ENCODE measurements at regions of chr16 and their contacts with region 1.

Region 1: DNA sequence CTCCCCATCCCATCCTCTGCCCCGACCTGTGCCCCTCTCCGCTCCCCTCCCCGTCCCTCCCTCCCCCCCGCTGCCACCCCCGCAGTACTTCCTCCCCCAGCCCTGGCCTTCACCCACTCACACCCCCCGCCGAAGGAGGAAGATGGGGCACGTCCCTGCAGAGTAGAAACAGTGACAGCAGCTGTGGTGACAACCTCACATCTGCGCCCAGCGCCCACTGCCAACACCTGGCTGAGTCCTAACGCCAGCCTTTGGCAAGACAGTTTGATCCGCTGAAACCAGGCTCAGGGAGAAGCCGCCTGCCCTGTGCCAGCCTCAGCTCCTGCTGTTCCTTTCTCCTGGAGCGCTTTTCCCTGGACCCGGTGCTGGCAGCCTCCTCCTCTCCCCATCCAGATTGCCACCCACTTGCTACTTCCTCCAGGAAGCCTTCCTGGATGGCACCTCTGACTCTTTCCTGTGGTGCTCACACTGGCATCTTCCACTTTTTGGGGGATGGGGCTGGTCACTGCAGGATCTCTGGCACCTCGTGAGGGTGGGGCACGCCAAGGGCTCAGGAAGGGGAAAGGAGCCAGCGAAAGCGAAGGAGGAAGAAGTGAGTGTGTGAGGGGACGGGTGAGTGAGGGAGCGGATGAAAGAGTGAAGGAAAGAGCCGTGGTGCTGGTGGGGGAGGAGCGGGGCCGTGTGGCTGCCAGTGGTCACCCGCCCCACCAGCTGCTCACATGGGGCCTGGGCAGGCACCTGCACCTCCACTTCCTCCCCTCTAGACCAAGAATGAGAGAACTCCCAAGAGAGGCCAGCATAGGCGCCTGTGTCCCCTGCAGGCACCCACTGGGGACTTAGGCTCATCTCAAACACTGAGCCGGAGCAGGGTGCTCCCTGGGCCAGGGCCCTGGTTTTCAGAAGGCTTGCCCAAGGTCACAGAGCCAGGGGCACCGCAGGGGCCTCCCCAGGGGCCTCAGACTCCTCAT is 27.0 kb downstream of the ZFPM1 start:
- DNase-seq: peak; percentile 58
- ATAC-seq: peak; percentile 75
- H3K4me3 Mint-ChIP-seq: peak overlapping the region; percentile 68
- H3K27ac Mint-ChIP-seq: peak overlapping the region; percentile 80
- H3K4me1 Mint-ChIP-seq: peaks cover 61% of the 10 kb centered on the region
- H3K27me3 Mint-ChIP-seq: no peaks in the 10 kb centered on the region
- CTCF ChIP-seq: no peak

Region 2: GRCh38 chr16:88102597-88102996 is 377.5 kb before region 1 on chr16:
- CTCF ChIA-PET with region 1: no interaction called
- POLR2A ChIA-PET with region 1: no interaction called
- intact Hi-C with region 1: no loop called
- DNase-seq: no peak
- ATAC-seq: no peak
- H3K4me3 Mint-ChIP-seq: no peak overlapping the region
- H3K27ac Mint-ChIP-seq: no peak overlapping the region
- H3K4me1 Mint-ChIP-seq: peaks cover 8% of the 10 kb centered on the region
- H3K27me3 Mint-ChIP-seq: peaks cover 20% of the 10 kb centered on the region
- CTCF ChIP-seq: no peak

Region 3: GRCh38 chr16:88430524-88431446 is 49.3 kb before region 1 on chr16:
- CTCF ChIA-PET with region 1: no interaction called
- POLR2A ChIA-PET with region 1: no interaction called
- intact Hi-C with region 1: no loop called
- DNase-seq: peak; percentile 62
- ATAC-seq: peak; percentile 70
- H3K4me3 Mint-ChIP-seq: peak overlapping the region; percentile 76
- H3K27ac Mint-ChIP-seq: no peak overlapping the region
- H3K4me1 Mint-ChIP-seq: peaks cover 11% of the 10 kb centered on the region
- H3K27me3 Mint-ChIP-seq: no peaks in the 10 kb centered on the region
- CTCF ChIP-seq: no peak

Region 4: GRCh38 chr16:88442727-88443576 is 37.1 kb before region 1 on chr16:
- CTCF ChIA-PET with region 1: no interaction called
- POLR2A ChIA-PET with region 1: no interaction called
- intact Hi-C with region 1: loop called (anchors 1 kb)
- DNase-seq: peak; percentile 83
- ATAC-seq: peak; percentile 89
- H3K4me3 Mint-ChIP-seq: no peak overlapping the region
- H3K27ac Mint-ChIP-seq: peak overlapping the region; percentile 12
- H3K4me1 Mint-ChIP-seq: peaks cover 5% of the 10 kb centered on the region
- H3K27me3 Mint-ChIP-seq: no peaks in the 10 kb centered on the region
- CTCF ChIP-seq: peak; percentile 57

Region 5: DNA sequence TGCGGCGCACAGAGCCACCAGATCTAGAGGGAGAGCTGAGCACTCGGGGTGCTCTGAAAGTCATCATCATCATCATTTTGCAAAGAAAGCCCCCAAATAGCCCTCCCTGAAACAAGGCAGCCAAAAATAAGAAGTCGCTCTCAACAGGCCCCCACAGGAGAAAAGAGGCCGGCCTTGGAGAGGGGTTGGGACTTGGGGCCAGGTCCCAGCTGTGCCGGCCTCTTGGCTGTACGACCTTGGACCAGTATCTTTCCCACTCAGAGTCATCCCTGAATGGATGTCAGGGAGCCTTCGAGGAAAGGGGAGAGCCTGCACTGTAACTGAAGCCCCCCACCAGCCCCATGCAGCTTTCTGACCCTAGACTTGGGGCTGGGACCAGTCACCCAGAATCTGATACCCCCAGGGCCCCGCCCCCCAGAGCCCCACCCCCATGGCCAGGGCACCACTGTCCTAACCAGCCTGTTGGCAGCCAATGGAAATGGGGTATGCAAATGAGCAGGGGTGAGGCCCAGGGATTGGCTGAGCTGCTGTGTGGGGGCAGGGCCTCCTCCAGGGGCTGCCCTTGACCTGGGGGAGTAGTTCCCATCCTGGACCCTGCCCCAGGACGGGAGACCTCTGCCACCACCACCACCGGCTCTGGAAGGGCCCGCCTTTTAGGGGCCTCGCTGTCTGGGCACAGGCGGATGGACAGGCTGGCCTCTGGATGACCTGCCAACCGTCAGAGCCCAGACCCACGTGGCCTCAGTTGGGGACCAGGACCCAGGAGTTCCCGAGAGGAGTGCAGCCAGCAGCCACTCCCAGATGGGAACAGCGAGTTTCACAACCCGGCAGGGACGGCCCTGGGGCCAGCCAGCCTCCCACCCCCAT is 11.6 kb before region 1 on chr16:
- CTCF ChIA-PET with region 1: no interaction called
- POLR2A ChIA-PET with region 1: interaction called, 8 read pairs
- intact Hi-C with region 1: loop called (anchors 2 kb)
- DNase-seq: no peak
- ATAC-seq: peak; percentile 38
- H3K4me3 Mint-ChIP-seq: no peak overlapping the region
- H3K27ac Mint-ChIP-seq: no peak overlapping the region
- H3K4me1 Mint-ChIP-seq: peaks cover 65% of the 10 kb centered on the region
- H3K27me3 Mint-ChIP-seq: no peaks in the 10 kb centered on the region
- CTCF ChIP-seq: no peak

Region 6: DNA sequence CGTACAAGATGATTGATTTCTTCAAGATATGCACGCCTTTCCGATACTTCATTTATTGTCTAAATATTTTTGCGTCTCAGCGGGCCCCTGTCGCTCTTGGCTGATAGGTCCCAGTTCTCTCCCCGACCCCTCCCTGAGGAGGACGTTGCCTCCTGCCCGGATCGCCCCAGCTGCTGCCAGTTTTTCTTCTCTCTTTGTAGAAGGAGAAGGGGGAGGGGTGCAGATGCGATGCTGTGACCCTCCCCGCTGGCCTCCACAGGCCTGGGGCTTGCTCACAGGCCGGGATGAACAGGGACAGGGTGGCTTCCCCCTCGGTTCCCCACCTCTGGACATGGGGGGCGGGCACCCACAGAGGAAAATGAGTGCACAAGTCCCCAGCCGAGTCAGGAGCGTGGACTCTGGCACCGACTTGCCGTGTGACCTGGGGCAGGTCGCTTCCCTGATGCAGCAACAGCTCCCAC is 36.6 kb after region 1 on chr16:
- CTCF ChIA-PET with region 1: no interaction called
- POLR2A ChIA-PET with region 1: no interaction called
- intact Hi-C with region 1: loop called (anchors 5 kb)
- DNase-seq: no peak
- ATAC-seq: no peak
- H3K4me3 Mint-ChIP-seq: no peak overlapping the region
- H3K27ac Mint-ChIP-seq: no peak overlapping the region
- H3K4me1 Mint-ChIP-seq: no peaks in the 10 kb centered on the region
- H3K27me3 Mint-ChIP-seq: no peaks in the 10 kb centered on the region
- CTCF ChIP-seq: no peak

Region 7: GRCh38 chr16:88527186-88527936 is 47.3 kb after region 1 on chr16:
- CTCF ChIA-PET with region 1: no interaction called
- POLR2A ChIA-PET with region 1: no interaction called
- intact Hi-C with region 1: loop called (anchors 1 kb)
- DNase-seq: peak; percentile 73
- ATAC-seq: peak; percentile 87
- H3K4me3 Mint-ChIP-seq: no peak overlapping the region
- H3K27ac Mint-ChIP-seq: no peak overlapping the region
- H3K4me1 Mint-ChIP-seq: peaks cover 5% of the 10 kb centered on the region
- H3K27me3 Mint-ChIP-seq: no peaks in the 10 kb centered on the region
- CTCF ChIP-seq: peak; percentile 23

Region 8: GRCh38 chr16:88561485-88562369 is 81.7 kb after region 1 on chr16:
- CTCF ChIA-PET with region 1: no interaction called
- POLR2A ChIA-PET with region 1: no interaction called
- intact Hi-C with region 1: loop called (anchors 1 kb)
- DNase-seq: peak; percentile 49
- ATAC-seq: peak; percentile 94
- H3K4me3 Mint-ChIP-seq: no peak overlapping the region
- H3K27ac Mint-ChIP-seq: no peak overlapping the region
- H3K4me1 Mint-ChIP-seq: peaks cover 5% of the 10 kb centered on the region
- H3K27me3 Mint-ChIP-seq: peaks cover 7% of the 10 kb centered on the region
- CTCF ChIP-seq: no peak